Activated CD4-positive, alpha-beta T cell treated with anti-CD3 and anti-CD28 coated beads for 36 hours (primary cell): ENCODE measurements at regions of chr9 and their contacts with region 1.

Region 1: DNA sequence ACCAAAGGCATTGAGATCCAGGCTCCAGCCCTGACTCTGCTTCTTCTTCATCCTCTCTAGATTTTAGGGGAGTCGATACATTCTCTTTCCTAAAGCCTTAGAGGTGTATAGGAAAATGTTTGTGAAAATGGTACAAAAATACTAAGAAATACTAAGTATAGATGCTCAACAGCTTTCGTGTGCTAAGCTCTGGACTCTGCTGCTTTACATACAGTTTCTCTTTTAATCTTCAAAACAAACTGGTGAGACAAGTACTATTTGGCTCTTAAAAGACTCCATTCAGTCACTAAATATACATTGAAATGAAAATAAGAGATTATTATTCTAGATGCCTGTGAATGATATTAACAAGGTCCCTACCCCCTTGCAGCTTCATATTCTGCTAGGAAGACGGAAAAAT is 174.5 kb upstream of the TRPM3 start:
- DNase-seq: no peak
- ATAC-seq: no peak
- H3K4me3 Mint-ChIP-seq: no peak overlapping the region
- H3K27ac Mint-ChIP-seq: no peak overlapping the region
- H3K4me1 Mint-ChIP-seq: no peaks in the 10 kb centered on the region
- H3K27me3 Mint-ChIP-seq: peaks cover 13% of the 10 kb centered on the region

Region 2: DNA sequence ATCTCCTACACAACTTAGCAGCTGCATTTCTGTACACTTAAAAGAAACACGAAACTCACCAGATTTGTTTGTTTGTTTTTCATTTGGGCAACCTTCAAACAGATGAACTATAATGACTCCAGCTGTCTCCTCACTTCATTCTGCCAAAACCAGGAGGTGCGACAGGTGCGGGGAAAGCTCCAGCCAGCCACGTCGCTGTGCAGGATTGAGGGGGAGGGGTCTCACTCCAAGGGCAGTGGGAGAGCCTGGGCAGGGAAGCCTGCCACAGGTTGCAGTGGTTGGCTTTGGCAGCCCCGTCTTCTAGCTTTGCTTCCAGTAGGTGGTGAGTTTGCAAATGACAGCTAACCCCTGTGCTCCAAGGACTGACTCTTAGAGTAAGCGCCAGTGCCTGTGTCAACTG is 256.6 kb after region 1 on chr9:
- CTCF ChIA-PET with region 1: no interaction called
- POLR2A ChIA-PET with region 1: no interaction called
- intact Hi-C with region 1: loop called in 1 of 2 experiments (anchors 10 kb)
- DNase-seq: no peak
- ATAC-seq: no peak
- H3K4me3 Mint-ChIP-seq: no peak overlapping the region
- H3K27ac Mint-ChIP-seq: no peak overlapping the region
- H3K4me1 Mint-ChIP-seq: no peaks in the 10 kb centered on the region
- H3K27me3 Mint-ChIP-seq: peaks cover 21% of the 10 kb centered on the region